Activated CD8-positive, alpha-beta memory T cell treated with anti-CD3 and anti-CD28 coated beads, Interleukin-2, amount 10 ng/mL, durations not matched to agents 7 days and 5 days (primary cell): ENCODE measurements at regions of chr4 and their contacts with region 1.

Region 1: DNA sequence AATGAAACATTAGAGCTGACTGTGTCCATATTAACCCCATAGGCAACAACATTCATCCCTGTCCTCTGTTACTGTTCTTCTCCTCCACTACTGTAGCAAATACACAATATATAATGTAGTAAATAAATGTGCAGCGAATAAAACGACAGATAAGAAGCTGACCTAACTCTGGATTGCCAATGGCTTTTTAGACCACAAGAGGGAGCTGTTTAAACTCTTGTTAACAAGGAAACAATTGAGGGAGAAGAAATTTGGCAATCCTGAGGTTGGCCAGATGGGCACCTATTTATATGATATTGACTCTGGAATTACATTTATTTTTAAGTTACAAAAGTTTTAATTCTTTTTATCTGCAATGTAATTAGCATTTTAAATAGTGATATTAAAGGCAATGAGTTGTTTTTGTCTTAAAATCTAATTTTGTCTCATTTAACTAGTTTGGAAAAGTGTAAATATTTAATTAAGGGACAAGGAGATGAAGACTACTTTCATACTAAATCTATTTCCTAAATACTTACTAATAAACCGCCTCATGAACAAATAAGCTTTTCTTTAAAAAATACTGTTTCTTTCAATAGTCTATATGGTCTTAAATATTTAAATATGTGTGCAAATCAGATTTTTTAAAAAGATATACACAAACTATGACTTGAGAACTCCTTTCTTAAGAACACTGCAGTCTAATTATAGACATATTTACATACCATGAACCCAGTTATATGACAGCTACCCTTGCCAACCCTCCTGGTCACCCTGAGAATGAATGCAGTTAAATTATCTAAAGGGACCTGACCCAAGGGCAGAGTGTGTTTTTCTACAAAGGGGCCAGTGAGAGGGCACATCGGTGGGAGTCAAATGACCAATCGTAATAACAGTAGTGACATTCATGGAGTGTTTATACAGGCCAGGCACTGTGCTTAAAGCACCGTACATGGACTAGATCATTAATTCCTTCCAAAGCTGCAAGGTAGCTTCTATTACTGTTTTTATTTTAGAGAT is 52.9 kb upstream of the HPF1 start:
- DNase-seq: no peak
- ATAC-seq: no peak
- H3K4me3 Mint-ChIP-seq: no peak overlapping the region
- H3K27ac Mint-ChIP-seq: no peak overlapping the region
- H3K4me1 Mint-ChIP-seq: peaks cover 2% of the 10 kb centered on the region
- H3K27me3 Mint-ChIP-seq: peaks cover 12% of the 10 kb centered on the region

Region 2: DNA sequence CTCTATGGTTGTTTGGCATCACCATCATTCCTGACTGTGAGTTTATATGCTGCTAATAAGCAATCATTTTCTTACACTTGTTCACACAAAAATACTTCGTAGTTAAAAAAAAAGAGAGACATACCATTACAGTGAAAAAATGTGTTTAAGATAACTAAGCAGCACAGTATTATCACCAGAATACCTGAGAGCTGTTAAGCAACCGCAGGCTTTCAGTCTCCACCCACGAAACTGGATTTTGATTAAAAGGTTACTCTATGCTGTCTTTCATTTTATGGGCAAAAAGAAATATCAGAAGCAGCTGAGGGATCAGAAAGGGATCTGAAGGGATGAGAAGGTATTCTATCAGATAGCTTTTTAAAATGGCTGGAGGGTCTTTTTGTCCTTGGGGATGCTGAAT is 346.5 kb before region 1 on chr4:
- CTCF ChIA-PET with region 1: no interaction called
- DNase-seq: no peak
- ATAC-seq: no peak
- H3K4me3 Mint-ChIP-seq: no peak overlapping the region
- H3K27ac Mint-ChIP-seq: no peak overlapping the region
- H3K4me1 Mint-ChIP-seq: no peaks in the 10 kb centered on the region
- H3K27me3 Mint-ChIP-seq: no peaks in the 10 kb centered on the region

Region 3: GRCh38 chr4:169823685-169824084 is 13.1 kb after region 1 on chr4:
- CTCF ChIA-PET with region 1: interaction called, 10 read pairs
- DNase-seq: no peak
- ATAC-seq: no peak
- H3K4me3 Mint-ChIP-seq: no peak overlapping the region
- H3K27ac Mint-ChIP-seq: no peak overlapping the region
- H3K4me1 Mint-ChIP-seq: no peaks in the 10 kb centered on the region
- H3K27me3 Mint-ChIP-seq: peaks cover 1% of the 10 kb centered on the region

Region 4: DNA sequence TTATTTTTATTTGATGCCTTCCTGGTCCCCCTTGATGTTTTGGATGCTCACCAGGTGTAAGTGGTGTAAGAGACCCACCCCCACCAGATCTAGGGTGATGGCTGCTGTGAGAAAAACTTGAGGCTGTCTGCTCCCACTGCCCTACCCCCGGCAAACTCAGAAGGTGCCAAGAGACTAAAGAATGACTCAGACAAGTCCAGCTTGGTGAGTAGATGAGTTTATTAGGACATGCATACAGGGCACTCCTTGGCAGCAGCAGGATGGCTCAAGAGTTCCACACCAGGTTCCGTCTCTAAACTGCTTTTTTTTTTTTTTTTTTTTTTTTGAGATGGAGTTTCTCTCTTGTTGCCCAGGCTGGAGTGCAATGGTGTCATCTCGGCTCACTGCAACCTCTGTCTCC is 31.2 kb after region 1 on chr4:
- CTCF ChIA-PET with region 1: no interaction called
- DNase-seq: no peak
- ATAC-seq: no peak
- H3K4me3 Mint-ChIP-seq: no peak overlapping the region
- H3K27ac Mint-ChIP-seq: no peak overlapping the region
- H3K4me1 Mint-ChIP-seq: no peaks in the 10 kb centered on the region
- H3K27me3 Mint-ChIP-seq: no peaks in the 10 kb centered on the region

Region 5: DNA sequence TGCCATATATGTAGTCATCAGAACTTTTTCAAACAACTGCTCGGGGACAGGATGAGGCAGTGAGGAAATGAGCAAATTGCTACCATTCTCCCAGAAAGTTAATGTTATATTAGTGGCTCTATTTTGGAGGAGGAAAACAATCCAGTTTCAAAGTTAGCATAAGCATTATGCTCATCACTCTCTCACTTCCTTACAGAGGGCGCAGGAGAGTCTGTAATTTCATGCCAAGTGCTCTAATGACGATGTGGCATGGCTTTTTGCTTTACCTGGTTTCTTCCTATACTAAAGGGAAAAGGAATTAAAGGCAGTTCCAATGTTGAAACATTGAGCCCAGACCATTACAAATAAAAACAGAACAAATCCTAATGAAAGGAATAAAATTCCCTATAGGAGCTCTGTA is 80.3 kb after region 1 on chr4:
- CTCF ChIA-PET with region 1: no interaction called
- DNase-seq: no peak
- ATAC-seq: no peak
- H3K4me3 Mint-ChIP-seq: no peak overlapping the region
- H3K27ac Mint-ChIP-seq: no peak overlapping the region
- H3K4me1 Mint-ChIP-seq: no peaks in the 10 kb centered on the region
- H3K27me3 Mint-ChIP-seq: no peaks in the 10 kb centered on the region

Region 6: GRCh38 chr4:170047771-170048354 is 237.2 kb after region 1 on chr4:
- CTCF ChIA-PET with region 1: interaction called, 19 read pairs
- DNase-seq: peak; percentile 63
- ATAC-seq: no peak
- H3K4me3 Mint-ChIP-seq: no peak overlapping the region
- H3K27ac Mint-ChIP-seq: no peak overlapping the region
- H3K4me1 Mint-ChIP-seq: no peaks in the 10 kb centered on the region
- H3K27me3 Mint-ChIP-seq: peaks cover 6% of the 10 kb centered on the region

Region 7: GRCh38 chr4:170109586-170110284 is 299.1 kb after region 1 on chr4:
- CTCF ChIA-PET with region 1: no interaction called
- DNase-seq: no peak
- ATAC-seq: no peak
- H3K4me3 Mint-ChIP-seq: no peak overlapping the region
- H3K27ac Mint-ChIP-seq: no peak overlapping the region
- H3K4me1 Mint-ChIP-seq: no peaks in the 10 kb centered on the region
- H3K27me3 Mint-ChIP-seq: peaks cover 18% of the 10 kb centered on the region